ENCODE measurements at regions of chr9 and their contacts with region 1.

Region 1: GRCh38 chr9:136790927-136791641 is at the start of gene TMEM141:
- DNase-seq: peak; percentile 98 to 100 (median 100)

Region 2: DNA sequence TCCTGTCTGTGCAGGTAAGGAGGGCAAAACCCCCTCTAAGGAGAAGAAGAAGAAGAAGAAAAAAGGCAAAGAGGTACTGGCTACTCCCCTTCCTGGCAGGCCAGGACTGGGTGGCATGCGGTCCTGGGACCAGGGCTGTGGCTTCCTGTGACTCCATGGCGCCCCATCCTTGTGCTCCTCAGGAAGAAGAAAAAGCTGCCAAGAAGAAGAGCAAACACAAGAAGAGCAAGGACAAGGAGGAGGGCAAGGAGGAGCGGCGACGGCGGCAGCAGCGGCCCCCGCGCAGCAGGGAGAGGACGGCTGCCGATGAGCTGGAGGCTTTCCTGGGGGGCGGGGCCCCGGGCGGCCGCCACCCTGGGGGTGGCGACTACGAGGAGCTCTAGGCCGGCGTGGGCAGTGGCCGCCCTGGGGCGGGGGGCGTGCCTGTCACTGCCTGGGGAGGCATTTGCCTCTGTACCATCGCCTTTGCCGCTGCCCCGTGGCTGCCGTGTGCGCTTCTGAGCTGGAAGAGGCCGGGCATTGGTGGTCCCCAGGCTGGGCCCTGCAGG is 49.1 kb after region 1 on chr9:
- intact Hi-C with region 1: loop called (anchors 5 kb)
- DNase-seq: no peak

Region 3: DNA sequence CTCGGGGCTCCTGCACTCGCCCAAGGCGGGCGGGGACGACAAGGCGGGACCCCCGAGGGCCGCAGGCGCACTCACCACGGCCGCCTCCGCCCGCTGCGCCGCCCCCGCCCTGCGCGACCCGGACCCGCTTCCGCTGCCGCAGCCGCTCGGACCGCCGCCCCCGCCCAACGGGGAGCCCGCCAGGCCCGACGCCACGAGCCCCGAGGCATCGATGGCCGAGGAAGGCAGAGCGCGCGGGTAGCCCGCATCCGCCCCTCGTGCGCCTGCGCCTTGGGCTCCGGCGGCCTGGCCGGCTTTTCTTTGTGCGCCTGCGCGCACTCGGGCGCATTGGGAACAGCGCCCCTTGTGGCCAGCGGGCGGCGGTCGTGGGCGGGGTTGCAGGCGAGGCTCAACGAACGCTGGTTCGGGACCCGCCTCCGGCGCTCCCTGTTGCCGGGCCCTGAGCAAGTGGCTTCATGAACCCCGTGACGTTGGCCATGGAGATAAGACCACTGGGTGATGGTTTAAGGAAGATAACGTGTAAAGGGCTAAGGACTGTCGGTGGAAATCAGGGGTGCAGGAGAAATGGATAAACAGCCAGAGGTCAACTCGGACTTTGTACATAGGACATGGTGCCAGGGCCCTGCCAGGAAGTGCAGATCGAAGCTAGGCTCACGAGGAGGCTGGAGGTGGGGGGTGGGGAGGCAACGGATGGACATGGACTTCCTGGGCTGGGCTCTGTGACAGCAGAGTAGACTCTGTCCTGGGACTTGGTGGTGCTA is 153.6 kb after region 1 on chr9 and contains the starts of genes C8G and FBXW5:
- intact Hi-C with region 1: loop called (anchors 10 kb)
- DNase-seq: peak; percentile 86 to 99 (median 92)

Region 4: GRCh38 chr9:137029058-137029936 is 238.2 kb after region 1 on chr9:
- intact Hi-C with region 1: loop called (anchors 5 kb)
- DNase-seq: peak; percentile 61 to 97 (median 84)

Measured in posterior cingulate gyrus (tissue), 11 donors.